ENCODE measurements at regions of chr4 and their contacts with region 1.

Region 1: GRCh38 chr4:48340965-48341775 is at the start of gene SLAIN2:
- DNase-seq: peak; percentile 95
- H3K4me3 ChIP-seq: peak within 1 kb of the TSS; percentile 93
- H3K27ac ChIP-seq: peak within 1 kb of the TSS; percentile 82
- H3K4me1 ChIP-seq: peaks cover 29% of the 10 kb centered on the region
- CTCF ChIP-seq: no peak
- total RNA-seq, gene SLAIN2: 21.1 and 24.7 TPM in 2 replicates

Region 2: GRCh38 chr4:47391256-47391655 is 949.9 kb before region 1 on chr4:
- CTCF ChIA-PET with region 1: no interaction called
- POLR2A ChIA-PET with region 1: no interaction called
- intact Hi-C with region 1: no loop called
- DNase-seq: no peak
- H3K4me3 ChIP-seq: no peak overlapping the region
- H3K27ac ChIP-seq: no peak overlapping the region
- H3K4me1 ChIP-seq: no peaks in the 10 kb centered on the region
- CTCF ChIP-seq: no peak

Region 3: GRCh38 chr4:47914220-47914925 is 426.8 kb before region 1 on chr4 and contains the start of gene NFXL1:
- CTCF ChIA-PET with region 1: no interaction called
- POLR2A ChIA-PET with region 1: no interaction called
- intact Hi-C with region 1: loop called (anchors 5 kb)
- DNase-seq: peak; percentile 97
- H3K4me3 ChIP-seq: peak within 1 kb of the TSS; percentile 98
- H3K27ac ChIP-seq: peak within 1 kb of the TSS; percentile 54
- H3K4me1 ChIP-seq: peaks cover 33% of the 10 kb centered on the region
- CTCF ChIP-seq: no peak
- total RNA-seq, gene NFXL1: 17.7 and 17.9 TPM in 2 replicates

Region 4: GRCh38 chr4:48195374-48195773 is 145.8 kb before region 1 on chr4:
- CTCF ChIA-PET with region 1: no interaction called
- POLR2A ChIA-PET with region 1: interaction called, 3 read pairs
- intact Hi-C with region 1: loop called (anchors 5 kb)
- DNase-seq: no peak
- H3K4me3 ChIP-seq: peak overlapping the region; percentile 37
- H3K27ac ChIP-seq: peak overlapping the region; percentile 61
- H3K4me1 ChIP-seq: peaks cover 66% of the 10 kb centered on the region
- CTCF ChIP-seq: no peak

Region 5: GRCh38 chr4:48396043-48396442 is 54.9 kb after region 1 on chr4:
- CTCF ChIA-PET with region 1: no interaction called
- POLR2A ChIA-PET with region 1: no interaction called
- intact Hi-C with region 1: no loop called
- DNase-seq: no peak
- H3K4me3 ChIP-seq: no peak overlapping the region
- H3K27ac ChIP-seq: no peak overlapping the region
- H3K4me1 ChIP-seq: no peaks in the 10 kb centered on the region
- CTCF ChIP-seq: no peak

Region 6: DNA sequence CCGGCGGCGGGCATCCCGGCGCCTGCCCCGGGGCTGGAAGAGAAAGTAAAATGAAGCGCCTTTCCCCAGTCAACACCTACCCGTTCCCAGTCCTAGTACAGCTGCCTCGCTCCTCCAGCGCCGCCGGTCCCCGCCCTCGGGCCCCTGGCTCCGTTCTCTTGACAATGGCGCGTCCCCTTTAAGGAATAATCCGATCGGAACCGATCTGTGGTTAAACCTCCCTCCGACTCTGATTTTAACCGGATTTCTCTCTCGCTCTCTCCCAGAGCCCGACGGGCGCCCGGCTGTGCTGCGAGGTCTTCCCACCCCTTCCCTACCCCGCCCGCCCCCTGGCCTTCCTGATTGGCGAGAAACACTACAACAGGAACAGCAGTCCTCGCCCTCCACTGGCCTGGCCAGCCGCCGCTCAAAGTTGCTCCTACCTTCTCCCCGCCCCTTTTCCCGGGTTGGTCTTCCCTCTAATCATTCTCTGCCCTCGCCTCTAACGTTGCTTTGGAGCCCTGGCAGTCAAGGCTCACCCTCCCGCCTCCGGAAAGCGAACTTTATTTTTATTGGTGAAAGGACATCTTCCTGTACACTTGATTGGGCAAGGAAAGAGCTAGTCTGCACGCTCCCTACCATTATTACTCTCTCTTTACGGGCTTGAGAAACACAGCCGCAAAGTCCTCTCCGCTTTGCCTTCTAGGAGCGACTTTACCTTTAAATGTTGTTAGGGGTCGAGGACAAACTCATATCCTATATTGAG is 439.0 kb after region 1 on chr4 and contains the start of gene FRYL:
- CTCF ChIA-PET with region 1: no interaction called
- POLR2A ChIA-PET with region 1: interaction called, 4 read pairs
- intact Hi-C with region 1: loop called (anchors 2 kb)
- DNase-seq: peak; percentile 99
- H3K4me3 ChIP-seq: peak within 1 kb of the TSS; percentile 83
- H3K27ac ChIP-seq: peak within 1 kb of the TSS; percentile 90
- H3K4me1 ChIP-seq: peaks cover 47% of the 10 kb centered on the region
- CTCF ChIP-seq: no peak
- total RNA-seq, gene FRYL: 85.4 and 91.9 TPM in 2 replicates

Measured in OCI-LY7 (cell line).